ENCODE measurements at regions of chr7 and their contacts with region 1.

Region 1: DNA sequence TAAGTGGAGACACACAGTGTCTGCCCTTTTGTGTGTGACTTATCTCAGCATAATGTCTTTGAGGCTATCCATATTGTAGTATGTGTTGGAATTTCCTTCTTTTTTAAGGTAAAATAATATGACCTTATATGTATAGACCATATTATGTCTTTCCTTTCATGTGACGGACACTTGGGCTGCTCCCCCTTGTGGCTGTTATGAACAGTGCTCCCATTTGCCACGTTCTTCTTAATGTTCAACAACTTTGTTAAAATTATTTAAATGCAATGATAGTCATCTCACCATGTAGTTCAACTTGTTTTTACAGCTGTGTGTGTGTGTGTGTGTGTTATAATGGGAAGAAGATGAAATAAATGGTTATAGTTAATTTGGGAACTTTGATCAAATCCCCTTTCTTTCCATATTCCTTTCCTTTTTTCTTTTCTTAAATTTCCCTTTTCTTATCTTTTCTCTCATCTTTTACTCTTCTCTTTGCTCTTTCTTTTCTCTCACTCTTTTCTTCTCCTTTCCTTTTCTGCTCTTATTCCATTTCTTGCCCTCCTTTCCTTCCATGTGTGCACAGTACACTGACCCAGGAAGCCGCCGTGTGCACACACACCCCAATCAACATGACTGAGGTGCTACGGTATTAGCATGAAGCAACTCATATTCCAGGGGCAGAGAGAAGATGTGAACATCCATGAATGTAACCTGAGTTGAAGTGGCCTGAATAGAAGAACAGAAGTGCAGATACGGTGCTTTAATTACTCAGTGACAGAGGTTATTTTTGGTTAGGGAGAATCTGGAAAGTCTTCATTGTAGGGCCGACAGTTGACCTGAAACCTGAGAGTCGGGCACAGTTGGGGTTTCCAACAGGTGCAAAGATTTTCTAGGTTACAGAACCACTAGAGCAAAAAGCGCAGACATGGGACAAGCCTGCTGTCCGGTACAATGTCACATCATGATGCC is 596.7 kb downstream of the SDK1 start:
- DNase-seq: peak in 1 of 2 donors; percentile 80
- H3K4me3 ChIP-seq: no peak overlapping the region
- CTCF ChIP-seq: no peak
- POLR2A ChIP-seq: no peak

Region 2: GRCh38 chr7:3300651-3301378 is 596.9 kb before region 1 on chr7 and contains the start of gene SDK1:
- intact Hi-C with region 1: loop called (anchors 5 kb)
- DNase-seq: peak; percentile 83 to 97
- H3K4me3 ChIP-seq: peak within 1 kb of the TSS; percentile 34
- CTCF ChIP-seq: no peak
- POLR2A ChIP-seq: no peak
- total RNA-seq, gene SDK1: 1.9 to 7.2 (median 5.1) TPM

Region 3: DNA sequence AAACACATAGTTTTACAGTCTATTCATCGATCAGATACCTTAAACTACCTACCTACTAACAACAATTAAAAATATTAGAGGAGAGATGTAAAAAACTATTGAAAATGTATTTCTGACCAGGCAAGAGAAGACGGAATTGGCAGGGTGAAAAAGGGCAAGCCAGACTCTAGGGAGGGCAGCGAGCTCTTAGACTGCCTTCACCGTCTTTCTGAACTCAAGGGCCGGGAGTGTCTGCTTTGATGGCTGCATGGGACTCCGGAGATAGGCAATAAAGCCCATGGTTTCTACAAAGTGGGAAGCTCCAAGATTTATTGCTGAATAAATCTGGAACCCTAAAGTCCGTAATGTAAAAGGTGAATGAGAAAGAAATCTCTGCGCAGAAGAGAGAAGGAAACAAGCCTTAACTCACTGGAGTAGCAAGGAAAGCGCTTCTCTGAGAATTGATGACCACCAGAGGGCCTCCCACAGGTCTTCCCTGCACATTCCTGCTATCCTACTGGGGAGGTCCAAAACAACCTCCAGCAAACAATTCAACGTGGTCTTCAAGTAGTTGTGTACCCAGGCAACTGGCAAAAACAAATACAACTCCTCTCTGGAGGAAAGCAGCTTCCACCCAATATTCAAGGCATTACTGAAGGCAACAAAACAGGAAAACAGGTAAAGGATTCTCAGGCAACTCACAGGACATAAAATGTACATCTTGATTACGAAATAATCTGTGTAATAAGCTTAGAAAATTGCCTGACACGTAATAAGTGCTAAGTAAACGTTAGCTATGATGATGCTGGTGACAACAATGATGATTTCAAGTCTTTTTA is 415.4 kb before region 1 on chr7:
- intact Hi-C with region 1: no loop called
- DNase-seq: no peak
- H3K4me3 ChIP-seq: no peak overlapping the region
- CTCF ChIP-seq: no peak
- POLR2A ChIP-seq: no peak

Measured in lower leg skin (tissue), 4 donors.